Activated naive CD8-positive, alpha-beta T cell treated with anti-CD3 and anti-CD28 coated beads, Interleukin-2, amount 10 ng/mL, durations not matched to agents 7 days and 5 days (primary cell): ENCODE measurements at regions of chr5 and their contacts with region 1.

Region 1: DNA sequence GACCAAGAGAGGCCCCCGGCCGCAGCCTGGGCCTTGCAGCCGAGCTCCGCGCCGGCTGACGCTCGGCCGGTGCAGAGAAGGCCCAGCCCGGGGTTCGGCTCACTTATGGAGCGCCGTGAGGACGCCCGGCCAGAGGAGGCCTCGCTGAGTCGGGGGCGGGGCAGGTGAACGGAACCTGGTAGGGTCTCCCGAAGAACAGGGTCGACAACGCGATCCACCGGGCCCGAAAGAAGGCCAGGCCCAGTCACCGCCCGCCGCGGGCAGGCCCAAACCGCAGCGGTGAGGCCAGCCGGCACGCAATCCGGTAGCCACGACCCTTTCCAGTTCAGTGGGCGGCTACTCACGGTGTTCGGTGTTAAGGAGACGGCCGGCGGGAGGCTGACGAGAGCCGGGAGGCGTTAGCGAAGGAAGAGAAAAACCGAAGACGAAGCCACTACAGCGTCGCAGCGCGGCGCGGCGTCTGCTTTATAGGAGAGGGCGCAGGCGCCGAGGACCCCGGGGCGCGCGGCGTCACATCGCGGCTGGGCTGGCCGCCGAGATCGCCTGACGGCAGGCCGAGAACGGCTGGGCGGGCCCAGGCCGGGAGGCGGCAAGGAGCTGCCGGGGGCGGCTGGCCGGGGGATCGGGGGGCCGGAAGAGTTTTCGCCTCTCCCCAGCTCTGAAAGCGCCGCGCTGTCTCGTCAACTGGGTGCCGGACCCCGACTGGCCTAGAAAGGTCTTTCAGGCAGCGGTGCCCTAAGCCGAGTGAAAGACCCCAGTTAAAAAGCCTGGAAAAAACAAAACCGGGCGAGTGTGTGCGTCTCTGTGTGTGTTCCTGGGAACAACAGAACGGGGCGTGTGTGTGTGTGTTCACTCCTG is at the start of gene SKP1:
- DNase-seq: peak; percentile 94
- ATAC-seq: peak; percentile 81
- H3K4me3 Mint-ChIP-seq: peak within 1 kb of the TSS; percentile 98
- H3K27ac Mint-ChIP-seq: peak within 1 kb of the TSS; percentile 94
- H3K4me1 Mint-ChIP-seq: peaks cover 15% of the 10 kb centered on the region
- H3K27me3 Mint-ChIP-seq: no peaks in the 10 kb centered on the region
- total RNA-seq, gene SKP1: 193 to 206 TPM

Region 2: DNA sequence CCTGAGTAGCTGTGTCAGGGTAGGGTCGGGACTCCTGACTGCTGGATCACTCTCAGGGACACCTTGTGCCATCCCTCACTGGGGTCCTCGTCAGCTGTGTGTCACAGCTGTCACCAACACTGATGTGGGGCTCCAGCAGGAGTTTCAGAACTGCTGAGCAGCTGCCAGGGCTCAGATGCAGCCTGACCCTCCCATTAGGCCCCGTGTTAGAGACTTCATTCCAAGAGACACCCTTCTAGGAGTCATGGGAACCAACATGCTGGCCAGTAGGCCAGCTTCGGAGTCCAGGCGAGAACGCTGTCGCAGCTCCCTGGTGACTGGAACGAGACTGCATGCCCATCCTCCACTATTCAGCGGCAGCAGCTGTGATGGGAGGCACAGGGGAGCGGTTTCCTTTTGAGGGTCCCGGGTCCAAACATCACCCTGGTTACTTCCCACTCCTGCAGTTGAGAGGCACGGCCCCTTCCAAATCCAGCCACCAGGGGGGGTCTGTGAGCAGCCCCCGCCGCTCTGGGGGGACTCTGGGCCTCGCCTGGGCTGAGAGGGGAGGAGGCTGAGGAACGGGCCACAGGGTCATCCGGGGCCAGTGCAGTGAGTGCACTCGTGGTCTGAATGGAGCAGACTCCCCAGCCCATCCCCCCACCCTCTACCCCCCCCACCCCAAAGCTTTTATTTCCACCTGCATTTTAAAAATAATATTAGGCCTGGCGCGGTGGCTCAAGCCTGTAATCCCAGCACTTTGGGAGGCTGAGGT is 74.9 kb before region 1 on chr5:
- POLR2A ChIA-PET with region 1: interaction called, 17 read pairs
- DNase-seq: peak; percentile 88
- ATAC-seq: peak; percentile 43
- H3K4me3 Mint-ChIP-seq: no peak overlapping the region
- H3K27ac Mint-ChIP-seq: no peak overlapping the region
- H3K4me1 Mint-ChIP-seq: peaks cover 67% of the 10 kb centered on the region
- H3K27me3 Mint-ChIP-seq: no peaks in the 10 kb centered on the region

Region 3: GRCh38 chr5:134140530-134141201 is 36.1 kb before region 1 on chr5:
- POLR2A ChIA-PET with region 1: interaction called, 12 read pairs
- DNase-seq: peak; percentile 71
- ATAC-seq: peak; percentile 45
- H3K4me3 Mint-ChIP-seq: no peak overlapping the region
- H3K27ac Mint-ChIP-seq: peak overlapping the region; percentile 80
- H3K4me1 Mint-ChIP-seq: peaks cover 59% of the 10 kb centered on the region
- H3K27me3 Mint-ChIP-seq: no peaks in the 10 kb centered on the region

Region 4: DNA sequence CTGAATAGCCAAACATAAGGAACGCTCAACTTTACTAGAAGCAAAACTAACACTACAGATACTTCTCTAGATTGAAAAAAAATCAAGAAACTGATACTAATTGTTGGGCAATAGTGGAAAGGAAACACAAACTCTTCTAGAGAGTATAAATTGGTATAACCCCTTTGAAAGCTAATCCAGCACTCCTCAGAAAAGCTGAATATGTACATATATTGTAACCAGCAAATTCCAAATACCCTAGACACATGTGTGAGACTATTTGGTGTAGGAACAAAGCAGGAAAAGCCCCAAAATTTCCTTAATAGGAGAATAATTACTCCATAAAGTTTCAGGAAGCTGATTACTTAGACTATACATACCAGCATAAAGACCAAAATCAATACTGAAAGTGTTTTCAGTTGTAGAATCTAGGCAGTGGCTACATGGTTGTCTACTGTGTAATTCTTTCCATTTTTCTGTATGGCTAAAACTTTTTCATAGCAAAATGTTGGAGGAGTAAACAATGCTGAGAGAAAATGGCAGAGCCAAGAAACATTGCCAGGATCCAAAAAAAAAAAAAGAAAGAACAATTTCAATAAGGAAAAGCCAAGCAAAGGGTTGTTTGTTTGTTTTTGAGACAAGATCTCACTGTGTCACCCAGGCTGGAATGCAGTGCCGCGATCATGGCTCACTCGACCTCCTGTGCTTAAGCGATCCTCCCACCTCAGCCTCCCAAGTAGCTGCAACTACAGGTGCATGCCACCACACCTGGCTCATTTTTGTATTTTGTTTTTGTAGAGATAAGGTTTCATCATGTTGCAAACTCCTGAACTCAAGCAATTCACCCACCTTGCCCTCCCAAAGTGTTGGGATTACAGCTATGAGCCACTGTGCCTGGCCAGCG is 15.0 kb before region 1 on chr5:
- POLR2A ChIA-PET with region 1: interaction called, 18 read pairs
- DNase-seq: no peak
- ATAC-seq: no peak
- H3K4me3 Mint-ChIP-seq: no peak overlapping the region
- H3K27ac Mint-ChIP-seq: no peak overlapping the region
- H3K4me1 Mint-ChIP-seq: peaks cover 5% of the 10 kb centered on the region
- H3K27me3 Mint-ChIP-seq: no peaks in the 10 kb centered on the region

Region 5: DNA sequence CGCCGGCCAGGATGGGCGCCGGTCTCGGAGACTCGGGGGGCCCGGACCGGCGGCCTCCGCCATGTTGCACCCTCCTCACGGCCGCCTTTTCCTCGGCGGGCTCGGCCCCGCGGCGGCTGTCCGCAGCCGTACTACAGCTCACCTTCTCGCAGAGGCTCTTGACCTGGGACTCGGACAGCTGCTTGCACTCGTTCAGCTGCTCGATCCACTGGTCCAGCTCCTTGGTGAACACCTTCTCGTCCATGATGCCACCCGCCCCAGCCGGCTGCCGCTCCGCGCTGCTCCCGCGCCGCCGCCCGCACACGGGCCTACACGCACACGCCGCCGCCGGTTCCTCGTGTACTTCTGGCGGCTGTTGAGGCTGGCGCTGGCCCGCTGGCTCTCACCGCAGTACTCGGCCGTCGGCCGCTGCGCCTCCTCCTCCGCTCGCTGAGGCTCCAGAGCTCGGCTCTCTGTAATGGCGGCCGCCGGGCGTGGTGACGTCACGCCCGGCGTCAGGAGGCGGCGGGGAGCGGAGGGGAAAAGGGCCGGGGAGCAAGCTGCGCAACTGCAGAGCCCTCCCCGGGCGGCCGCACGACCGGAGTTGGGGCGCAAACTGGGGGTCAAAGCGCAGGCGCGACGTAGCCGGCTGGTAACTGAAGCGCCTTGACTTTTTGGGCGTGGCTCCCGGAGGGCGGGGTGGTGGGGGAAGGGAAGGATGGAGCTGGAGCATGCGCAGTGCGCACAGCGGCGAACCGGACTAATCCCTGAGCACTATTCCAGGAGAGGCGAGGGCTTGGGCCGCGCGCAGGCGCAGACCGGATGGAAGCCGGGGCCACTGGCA is 49.1 kb after region 1 on chr5 and contains the start of gene PPP2CA:
- POLR2A ChIA-PET with region 1: interaction called, 48 read pairs
- DNase-seq: peak; percentile 99
- ATAC-seq: peak; percentile 88
- H3K4me3 Mint-ChIP-seq: peak within 1 kb of the TSS; percentile 67
- H3K27ac Mint-ChIP-seq: peak within 1 kb of the TSS; percentile 98
- H3K4me1 Mint-ChIP-seq: peaks cover 35% of the 10 kb centered on the region
- H3K27me3 Mint-ChIP-seq: no peaks in the 10 kb centered on the region
- total RNA-seq, gene PPP2CA: 122 to 129 TPM

Region 6: GRCh38 chr5:134304311-134304710 is 127.6 kb after region 1 on chr5:
- POLR2A ChIA-PET with region 1: no interaction called
- DNase-seq: no peak
- ATAC-seq: no peak
- H3K4me3 Mint-ChIP-seq: no peak overlapping the region
- H3K27ac Mint-ChIP-seq: no peak overlapping the region
- H3K4me1 Mint-ChIP-seq: peaks cover 9% of the 10 kb centered on the region
- H3K27me3 Mint-ChIP-seq: no peaks in the 10 kb centered on the region

Region 7: DNA sequence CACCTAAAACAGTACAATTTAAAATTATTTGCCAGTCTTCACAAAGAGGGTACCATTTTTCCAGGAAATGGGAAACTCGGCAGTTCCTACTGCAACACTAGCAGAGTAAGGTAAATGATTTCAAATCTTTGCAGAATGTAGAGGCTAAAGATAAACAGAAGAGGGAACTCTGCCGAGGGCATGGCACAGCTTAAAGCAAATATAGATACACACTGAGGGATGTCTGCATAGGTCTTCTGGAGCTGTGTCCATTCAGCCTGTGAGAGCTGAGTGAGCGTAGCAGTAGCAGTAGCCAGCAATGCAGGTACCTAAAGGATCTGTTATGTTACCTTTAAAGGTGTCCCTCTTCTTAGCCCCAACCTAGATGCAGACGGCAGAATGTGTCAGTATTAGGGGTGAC is 172.7 kb after region 1 on chr5:
- POLR2A ChIA-PET with region 1: no interaction called
- DNase-seq: no peak
- ATAC-seq: no peak
- H3K4me3 Mint-ChIP-seq: no peak overlapping the region
- H3K27ac Mint-ChIP-seq: no peak overlapping the region
- H3K4me1 Mint-ChIP-seq: peaks cover 2% of the 10 kb centered on the region
- H3K27me3 Mint-ChIP-seq: no peaks in the 10 kb centered on the region